Activated naive CD4-positive, alpha-beta T cell treated with anti-CD3 and anti-CD28 coated beads for 36 hours (primary cell): ENCODE measurements at regions of chr4 and their contacts with region 1.

Region 1: DNA sequence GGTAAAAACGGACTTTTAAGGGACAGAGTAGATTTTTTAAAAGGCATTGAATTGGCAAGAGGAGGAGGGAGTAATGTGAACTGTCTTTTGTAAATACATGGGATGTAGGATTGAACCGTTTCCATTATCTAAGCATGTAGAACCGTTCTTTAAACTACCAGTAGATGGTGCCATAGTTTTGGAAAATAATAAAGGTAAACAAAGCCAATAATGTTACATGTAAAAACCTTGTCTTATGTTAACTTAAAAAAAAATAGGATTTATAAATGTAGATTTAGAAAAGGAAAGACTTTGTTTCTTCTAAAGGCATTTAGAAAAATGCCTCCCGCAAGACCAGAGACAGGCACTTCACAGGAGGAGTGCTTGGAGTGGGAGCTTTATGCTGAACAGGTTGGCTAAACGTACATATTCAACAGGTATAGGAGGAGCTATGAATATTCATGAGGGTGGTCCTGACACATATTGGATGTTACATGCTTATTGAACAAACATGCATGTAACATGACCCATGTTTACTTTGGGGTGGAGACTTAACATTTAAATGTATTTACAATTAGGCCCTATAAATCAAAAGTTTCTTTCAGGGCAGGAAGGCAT is 45.5 kb upstream of the FAM241A start:
- DNase-seq: no peak
- H3K4me3 Mint-ChIP-seq: no peak overlapping the region
- H3K27ac Mint-ChIP-seq: no peak overlapping the region
- H3K4me1 Mint-ChIP-seq: peaks cover 5% of the 10 kb centered on the region
- H3K27me3 Mint-ChIP-seq: peaks cover 3% of the 10 kb centered on the region

Region 2: DNA sequence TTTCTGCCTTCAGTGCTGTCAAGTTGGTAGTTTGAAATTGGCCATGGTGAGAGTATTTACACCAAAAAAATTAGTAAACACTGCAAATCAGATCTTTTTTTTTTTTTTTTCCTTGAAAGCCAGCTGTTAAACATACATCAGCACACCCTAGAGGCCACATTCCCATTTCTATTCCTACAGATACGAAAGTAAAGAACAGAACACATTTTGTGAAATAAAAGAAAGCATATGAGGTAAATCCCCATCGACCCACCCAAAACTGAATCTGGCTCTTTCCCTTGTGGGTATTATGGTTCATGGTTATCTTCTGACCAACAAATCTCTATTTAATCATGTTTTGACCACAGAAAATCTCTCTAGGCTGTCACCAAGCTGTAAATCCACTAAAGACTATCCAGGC is 90.0 kb after region 1 on chr4:
- CTCF ChIA-PET with region 1: interaction called, 6 read pairs
- intact Hi-C with region 1: loop called (anchors 2 kb)
- DNase-seq: no peak
- H3K4me3 Mint-ChIP-seq: no peak overlapping the region
- H3K27ac Mint-ChIP-seq: no peak overlapping the region
- H3K4me1 Mint-ChIP-seq: peaks cover 4% of the 10 kb centered on the region
- H3K27me3 Mint-ChIP-seq: no peaks in the 10 kb centered on the region

Region 3: DNA sequence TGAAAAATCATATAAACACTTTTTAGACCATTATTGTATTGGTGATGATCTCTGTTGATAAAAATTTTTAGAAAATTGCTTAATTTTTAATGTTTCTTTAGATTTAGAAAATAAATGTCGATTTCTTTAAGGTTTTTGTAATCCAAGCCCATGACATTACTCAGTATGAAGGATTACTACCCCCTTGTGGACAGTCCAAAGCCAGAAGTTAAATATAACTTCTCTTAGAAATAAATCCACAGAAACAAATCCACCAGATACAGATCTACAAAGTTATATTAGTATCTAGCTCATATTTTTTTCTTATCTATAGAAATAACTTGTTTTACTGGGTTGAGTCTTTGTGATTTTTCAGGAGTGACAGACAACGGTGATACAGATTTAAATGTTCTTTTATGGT is 167.0 kb after region 1 on chr4:
- CTCF ChIA-PET with region 1: interaction called, 7 read pairs
- intact Hi-C with region 1: loop called (anchors 1 kb)
- DNase-seq: no peak
- H3K4me3 Mint-ChIP-seq: no peak overlapping the region
- H3K27ac Mint-ChIP-seq: peak overlapping the region; percentile 71
- H3K4me1 Mint-ChIP-seq: peaks cover 33% of the 10 kb centered on the region
- H3K27me3 Mint-ChIP-seq: no peaks in the 10 kb centered on the region

Region 4: DNA sequence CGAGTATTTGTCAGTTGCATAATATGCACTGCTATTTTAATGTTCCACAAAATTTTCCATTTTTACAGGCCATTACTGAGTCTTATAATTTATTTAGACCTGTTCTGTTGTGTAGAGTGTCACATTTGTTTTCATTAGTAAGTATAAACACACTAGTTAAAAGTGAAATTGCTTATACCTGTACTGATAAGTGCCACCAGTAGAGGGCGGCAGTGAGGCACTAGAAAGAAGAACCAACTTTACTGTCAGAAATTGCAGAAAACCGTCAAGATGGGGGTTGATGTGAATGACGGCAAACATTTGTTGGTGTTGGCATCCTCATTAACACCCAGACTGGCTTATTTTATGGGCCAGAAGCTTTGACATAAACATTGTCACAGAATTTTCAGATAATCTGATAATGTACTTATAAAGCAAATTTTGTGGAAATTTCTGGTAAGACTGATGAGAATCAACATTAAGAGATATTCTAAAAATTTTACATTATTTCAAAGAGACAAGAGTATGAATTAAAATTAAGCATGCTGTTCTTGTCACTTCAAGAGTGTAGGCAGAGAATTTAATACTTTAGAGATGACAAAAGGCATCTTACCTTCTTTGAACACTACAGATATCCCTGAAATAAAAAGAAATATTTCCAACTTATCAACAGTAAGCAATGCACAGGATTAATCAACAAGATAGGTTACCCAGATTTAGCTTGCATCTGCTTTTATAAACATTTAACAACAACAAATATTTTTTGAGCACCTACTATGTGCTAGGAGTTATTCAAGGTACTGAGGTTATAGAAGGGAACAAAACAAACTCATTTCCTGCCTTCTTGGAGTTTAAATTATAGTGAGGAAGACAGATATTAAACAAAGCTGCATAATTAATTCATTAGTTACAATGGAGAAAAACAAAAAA is 222.2 kb after region 1 on chr4:
- CTCF ChIA-PET with region 1: interaction called, 6 read pairs
- intact Hi-C with region 1: loop called (anchors 2 kb)
- DNase-seq: peak; percentile 90
- H3K4me3 Mint-ChIP-seq: no peak overlapping the region
- H3K27ac Mint-ChIP-seq: no peak overlapping the region
- H3K4me1 Mint-ChIP-seq: peaks cover 19% of the 10 kb centered on the region
- H3K27me3 Mint-ChIP-seq: no peaks in the 10 kb centered on the region

Region 5: GRCh38 chr4:112604589-112604988 is 504.8 kb after region 1 on chr4:
- CTCF ChIA-PET with region 1: interaction called, 4 read pairs
- intact Hi-C with region 1: loop called (anchors 2 kb)
- DNase-seq: peak; percentile 44
- H3K4me3 Mint-ChIP-seq: no peak overlapping the region
- H3K27ac Mint-ChIP-seq: no peak overlapping the region
- H3K4me1 Mint-ChIP-seq: no peaks in the 10 kb centered on the region
- H3K27me3 Mint-ChIP-seq: no peaks in the 10 kb centered on the region